Prostate gland (tissue), 2 donors: ENCODE measurements at regions of chr5 and their contacts with region 1.

Region 1: DNA sequence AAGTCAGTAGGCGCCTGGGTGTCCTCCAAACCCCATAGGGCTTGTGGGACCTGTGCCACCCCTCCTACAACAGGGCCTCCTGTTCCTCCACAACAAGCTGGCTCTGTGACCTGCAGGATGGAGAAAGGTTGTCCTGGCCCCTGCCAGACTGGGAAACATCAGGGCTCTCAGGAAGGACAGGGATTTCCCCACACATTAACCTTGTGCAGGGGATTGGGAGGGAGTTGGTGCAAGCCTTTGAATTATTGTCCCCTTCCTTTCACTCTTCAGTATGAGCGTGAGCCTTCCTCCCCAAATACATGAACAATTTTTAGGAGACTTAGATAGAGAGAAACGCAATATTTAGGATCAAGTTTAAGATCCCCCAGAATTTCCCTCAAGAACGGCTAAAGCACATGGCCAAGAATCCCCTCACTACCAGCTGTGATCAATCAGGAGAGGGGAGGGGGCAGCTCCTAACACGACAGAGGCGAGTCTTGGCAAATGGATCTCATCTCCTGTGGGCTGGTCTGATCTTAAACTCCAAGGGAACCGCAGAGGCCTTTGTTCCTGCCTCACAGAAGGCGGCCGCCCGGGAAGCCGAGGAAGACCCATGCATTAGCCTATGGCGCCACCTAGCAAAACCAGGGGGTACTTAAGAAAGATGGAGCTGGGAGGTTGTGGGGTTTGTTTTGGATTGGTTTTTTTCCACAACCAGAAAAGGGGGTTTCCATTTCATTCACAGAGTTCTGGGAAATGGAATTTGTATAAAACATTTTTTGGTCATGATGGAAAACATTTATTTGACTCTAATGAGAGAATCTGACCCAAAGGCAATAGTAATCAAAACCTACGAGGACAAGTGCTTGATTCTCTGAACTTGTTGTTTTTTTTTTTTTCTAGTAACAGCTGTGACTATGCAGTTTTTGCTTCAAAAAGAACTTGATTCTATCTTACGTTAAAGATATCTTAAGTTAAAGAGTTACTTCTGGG is 36.1 kb upstream of the OSMR start:
- DNase-seq: peak; percentile 83
- H3K4me3 ChIP-seq: no peak overlapping the region
- H3K27ac ChIP-seq: no peak overlapping the region
- H3K4me1 ChIP-seq: no peaks in the 10 kb centered on the region
- H3K27me3 ChIP-seq: no peaks in the 10 kb centered on the region
- CTCF ChIP-seq: peak; percentile 62 to 93 (median 80)
- POLR2A ChIP-seq: no peak

Region 2: DNA sequence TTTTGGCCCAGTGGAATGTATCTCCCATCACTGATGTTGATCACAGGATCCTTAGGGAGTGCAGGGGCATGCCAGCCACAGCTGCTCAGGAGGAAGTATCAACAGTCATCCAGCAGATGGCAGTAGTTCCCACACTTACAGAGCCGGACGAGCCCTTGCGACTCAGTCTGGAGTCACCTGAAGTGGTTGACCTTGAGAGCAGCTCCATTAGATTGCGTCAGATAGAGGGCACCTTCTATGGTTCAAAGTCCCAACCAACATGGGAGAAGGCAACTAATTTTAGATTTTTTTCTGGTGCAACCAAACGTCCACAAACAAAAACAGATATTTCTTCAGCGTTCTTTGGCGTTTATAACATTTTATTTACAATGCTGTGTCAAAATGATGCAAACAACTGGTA is 426.8 kb before region 1 on chr5:
- intact Hi-C with region 1: loop called (anchors 5 kb)
- DNase-seq: peak; percentile 51
- H3K4me3 ChIP-seq: no peak overlapping the region
- H3K27ac ChIP-seq: no peak overlapping the region
- H3K4me1 ChIP-seq: no peaks in the 10 kb centered on the region
- H3K27me3 ChIP-seq: no peaks in the 10 kb centered on the region
- CTCF ChIP-seq: peak; percentile 42 to 70 (median 62)
- POLR2A ChIP-seq: no peak

Region 3: GRCh38 chr5:38556599-38557305 is 252.9 kb before region 1 on chr5 and contains the start of gene LIFR:
- intact Hi-C with region 1: loop called (anchors 10 kb)
- DNase-seq: peak; percentile 84
- H3K4me3 ChIP-seq: peak within 1 kb of the TSS; percentile 90 to 96
- H3K27ac ChIP-seq: peak within 1 kb of the TSS; percentile 99
- H3K4me1 ChIP-seq: no peaks in the 10 kb centered on the region
- H3K27me3 ChIP-seq: no peaks in the 10 kb centered on the region
- CTCF ChIP-seq: no peak
- POLR2A ChIP-seq: peak; percentile 81
- total RNA-seq, gene LIFR: 68.5 to 120 TPM

Region 4: DNA sequence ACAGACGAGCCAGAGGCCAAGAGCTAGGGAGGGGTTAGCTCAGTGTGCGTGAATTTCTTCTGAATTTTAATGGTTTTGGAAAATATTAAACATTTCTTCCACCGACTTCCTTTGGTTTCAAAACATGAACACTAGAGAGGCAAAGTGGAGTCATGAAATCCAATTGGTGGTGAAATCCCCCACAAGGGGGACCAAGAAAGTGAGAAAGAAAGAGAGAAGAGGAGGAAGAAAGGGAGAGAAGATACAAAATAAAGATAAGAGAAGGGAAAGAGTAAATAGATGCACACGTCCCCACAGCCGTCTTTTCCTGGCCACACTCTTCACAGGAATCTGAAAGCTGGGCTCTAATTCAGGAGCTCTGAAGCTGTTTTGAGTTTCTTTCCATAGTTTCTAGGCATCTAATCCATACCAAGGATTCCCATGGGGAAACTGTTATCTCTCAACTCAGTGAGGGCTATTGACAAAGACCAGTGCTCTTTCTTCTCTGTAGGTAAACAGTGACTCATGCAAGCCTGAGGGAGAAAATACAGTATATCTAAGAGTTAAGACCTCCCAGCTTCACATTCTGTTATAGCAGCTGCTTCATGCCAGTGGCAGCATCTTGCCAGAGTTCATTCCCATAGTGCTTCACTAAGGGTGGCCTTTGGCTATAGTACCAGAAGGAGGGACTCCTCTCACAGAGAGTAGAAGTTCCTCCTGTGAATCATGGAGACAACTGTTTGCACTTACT is 137.4 kb before region 1 on chr5:
- intact Hi-C with region 1: loop called (anchors 5 kb)
- DNase-seq: no peak
- H3K4me3 ChIP-seq: no peak overlapping the region
- H3K27ac ChIP-seq: peak overlapping the region; percentile 49 to 52
- H3K4me1 ChIP-seq: no peaks in the 10 kb centered on the region
- H3K27me3 ChIP-seq: no peaks in the 10 kb centered on the region
- CTCF ChIP-seq: no peak
- POLR2A ChIP-seq: no peak